ENCODE measurements at regions of chr5 and their contacts with region 1.

Region 1: DNA sequence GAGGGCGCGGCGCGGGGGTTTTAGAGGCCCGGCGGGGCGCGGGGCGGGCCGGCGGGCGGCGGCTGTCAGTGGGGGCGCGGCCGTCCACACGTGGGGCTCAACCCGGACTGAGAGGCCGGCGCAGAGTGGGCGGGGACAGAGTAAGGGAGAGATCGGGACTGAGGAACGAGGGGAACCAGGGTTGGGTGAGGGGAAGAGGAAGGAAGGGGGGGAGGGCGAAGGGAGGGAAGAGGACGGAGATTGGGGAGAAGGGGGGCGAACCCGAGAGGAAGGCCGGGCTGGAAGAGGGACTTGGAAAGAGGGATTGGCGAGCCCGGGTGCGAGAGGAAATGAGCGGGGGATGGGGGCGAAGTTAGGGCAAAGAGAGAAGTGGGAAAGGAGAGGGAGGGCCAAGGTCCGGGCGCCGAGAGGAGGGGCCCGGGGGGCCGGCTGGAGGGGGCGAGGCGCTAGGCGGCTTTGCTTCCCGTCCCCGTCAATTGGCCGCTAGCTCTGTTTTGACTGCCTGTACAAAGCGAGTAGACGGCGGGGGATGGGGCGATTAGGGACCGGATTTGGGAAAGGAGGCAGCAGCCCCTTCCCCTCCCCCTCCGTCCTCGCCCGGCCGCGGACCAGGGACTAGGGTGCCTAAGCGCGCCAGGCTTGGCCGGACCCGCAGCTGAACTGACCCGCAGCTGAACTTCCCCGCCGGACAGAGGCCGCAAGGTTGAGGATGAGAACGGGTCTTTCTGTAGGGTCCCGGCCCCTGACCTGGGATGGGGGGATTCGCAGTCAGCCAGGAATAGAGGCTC is 399 bp upstream of the FBN2 start:
- DNase-seq: peak; percentile 80
- H3K4me3 ChIP-seq: peak overlapping the region; percentile 72 to 97 (median 92)
- H3K27ac ChIP-seq: peak overlapping the region; percentile 42
- H3K4me1 ChIP-seq: peaks cover 18% of the 10 kb centered on the region
- H3K27me3 ChIP-seq: no peaks in the 10 kb centered on the region
- CTCF ChIP-seq: no peak

Region 2: DNA sequence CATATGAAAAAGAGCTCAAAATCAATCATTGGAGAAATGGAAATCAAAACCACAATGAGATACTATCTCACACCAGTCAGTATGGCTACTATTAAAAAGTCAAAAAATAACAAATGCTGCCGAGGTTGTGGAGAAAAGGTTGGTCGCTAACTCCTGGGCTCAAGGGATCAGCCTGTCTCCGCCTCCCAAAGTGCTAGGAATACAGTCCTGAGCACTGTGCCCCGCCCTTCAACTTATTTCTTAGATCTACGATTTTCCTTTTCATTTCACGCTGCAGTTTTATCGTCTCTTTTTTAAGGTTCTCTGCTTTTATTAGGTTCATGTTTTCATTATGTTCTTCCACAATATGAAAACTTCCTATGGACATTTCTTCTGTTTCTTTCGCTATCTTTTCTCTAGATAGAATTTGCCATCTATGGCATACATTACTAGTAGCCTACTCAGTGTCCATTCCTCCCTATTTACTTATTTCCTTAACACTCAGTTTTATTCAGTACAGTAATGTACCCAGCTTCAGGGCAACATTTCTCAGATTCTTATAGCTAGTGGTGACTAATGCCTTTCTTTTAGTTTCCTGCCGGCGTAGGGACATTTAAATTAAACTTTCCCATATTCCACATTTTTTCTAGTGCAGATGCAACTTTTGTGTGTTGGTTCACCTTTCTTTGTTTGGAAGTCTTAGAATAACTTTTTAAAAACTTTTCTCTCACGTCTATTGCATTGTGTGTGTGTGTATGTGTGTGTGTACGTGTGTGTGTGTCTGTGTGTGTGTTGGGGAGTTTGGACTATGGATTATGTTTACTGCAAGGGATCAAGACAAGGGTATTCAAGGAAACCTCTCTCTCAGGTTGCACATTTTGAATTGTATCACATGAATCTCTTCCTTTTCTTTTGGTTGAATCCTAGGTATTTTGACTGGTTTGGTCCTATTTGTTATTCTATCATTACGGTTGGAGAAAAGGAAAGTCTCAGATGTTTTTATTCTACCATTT is 21.2 kb after region 1 on chr5:
- CTCF ChIA-PET with region 1: no interaction called
- dilution Hi-C with region 1: no loop called
- in situ Hi-C with region 1: no loop called
- intact Hi-C with region 1: no loop called
- DNase-seq: peak; percentile 31
- H3K4me3 ChIP-seq: no peak overlapping the region
- H3K27ac ChIP-seq: no peak overlapping the region
- H3K4me1 ChIP-seq: peaks cover 9% of the 10 kb centered on the region
- H3K27me3 ChIP-seq: no peaks in the 10 kb centered on the region
- CTCF ChIP-seq: no peak

Region 3: GRCh38 chr5:128579088-128579487 is 40.6 kb after region 1 on chr5:
- CTCF ChIA-PET with region 1: no interaction called
- dilution Hi-C with region 1: no loop called
- in situ Hi-C with region 1: no loop called
- intact Hi-C with region 1: loop called (anchors 2 kb)
- DNase-seq: peak; percentile 67
- H3K4me3 ChIP-seq: no peak overlapping the region
- H3K27ac ChIP-seq: peak overlapping the region; percentile 26
- H3K4me1 ChIP-seq: peaks cover 23% of the 10 kb centered on the region
- H3K27me3 ChIP-seq: no peaks in the 10 kb centered on the region
- CTCF ChIP-seq: no peak

Region 4: GRCh38 chr5:128597156-128597555 is 58.7 kb after region 1 on chr5:
- CTCF ChIA-PET with region 1: no interaction called
- dilution Hi-C with region 1: no loop called
- in situ Hi-C with region 1: no loop called
- intact Hi-C with region 1: no loop called
- DNase-seq: no peak
- H3K4me3 ChIP-seq: no peak overlapping the region
- H3K27ac ChIP-seq: no peak overlapping the region
- H3K4me1 ChIP-seq: no peaks in the 10 kb centered on the region
- H3K27me3 ChIP-seq: no peaks in the 10 kb centered on the region
- CTCF ChIP-seq: no peak

Region 5: DNA sequence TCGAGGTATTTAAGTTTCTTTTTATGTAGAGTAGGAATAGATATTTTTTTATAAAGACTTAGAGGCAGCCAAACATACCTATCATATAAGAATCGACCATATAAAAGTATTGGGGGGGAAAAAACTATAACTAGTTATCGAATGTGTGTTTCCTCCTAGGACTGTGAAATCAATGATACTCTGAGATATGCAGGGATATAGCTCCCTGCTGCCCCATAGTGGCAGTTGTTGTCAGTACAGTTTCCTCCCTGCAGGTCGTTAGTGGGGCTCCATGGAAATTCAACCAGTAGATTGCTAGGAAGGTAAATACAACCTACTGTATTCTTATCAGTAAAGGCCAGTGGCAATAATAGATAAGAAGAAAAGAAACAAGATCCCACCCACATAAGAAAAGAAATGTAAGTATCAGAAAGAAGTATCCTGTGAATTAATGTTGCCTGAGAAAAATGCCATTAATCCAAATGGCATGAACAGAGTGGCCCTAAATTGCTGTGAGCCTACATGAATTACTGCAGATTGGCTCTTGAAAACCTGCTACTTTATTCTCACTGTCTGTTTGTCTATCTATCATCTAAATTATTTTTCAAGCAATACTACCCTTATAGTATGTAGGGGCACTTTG is 136.5 kb after region 1 on chr5:
- CTCF ChIA-PET with region 1: no interaction called
- dilution Hi-C with region 1: no loop called
- in situ Hi-C with region 1: loop called in 1 of 2 experiments (anchors 25 kb)
- intact Hi-C with region 1: loop called (anchors 1 kb)
- DNase-seq: peak; percentile 43
- H3K4me3 ChIP-seq: no peak overlapping the region
- H3K27ac ChIP-seq: no peak overlapping the region
- H3K4me1 ChIP-seq: no peaks in the 10 kb centered on the region
- H3K27me3 ChIP-seq: no peaks in the 10 kb centered on the region
- CTCF ChIP-seq: peak; percentile 87